GM13976 (cell line): ENCODE measurements at regions of chr3 and their contacts with region 1.

Region 1: DNA sequence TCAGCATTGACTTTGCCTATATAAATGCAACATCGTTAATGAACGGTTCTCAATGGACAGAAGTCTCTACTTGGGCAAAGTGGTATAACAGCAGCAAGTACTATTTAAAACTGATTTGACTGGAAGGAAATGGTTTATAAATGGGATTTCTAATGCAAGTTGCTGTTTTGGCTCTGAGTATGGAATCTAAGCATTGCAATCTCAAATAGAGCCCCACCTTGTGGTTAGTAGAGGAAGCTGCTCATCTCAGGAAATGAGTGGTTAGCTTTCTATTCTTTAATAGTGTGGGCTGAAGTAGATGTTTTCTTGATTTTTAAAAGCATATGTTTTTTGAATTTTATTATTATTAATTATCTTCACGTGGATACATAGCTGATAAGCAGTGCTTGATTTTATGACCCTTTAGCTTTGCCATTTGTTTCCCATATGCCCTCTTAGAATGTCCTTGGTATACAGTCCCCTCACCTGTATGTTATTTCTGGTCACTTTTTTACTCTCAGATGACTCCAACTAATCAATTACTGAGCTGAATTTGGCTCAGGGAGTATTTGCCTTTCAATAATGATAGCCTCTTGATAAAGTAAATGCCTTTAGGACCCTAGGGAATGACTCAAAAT is 67.1 kb downstream of the OXSM start:
- DNase-seq: peak; percentile 65
- CTCF ChIP-seq: peak; percentile 65

Region 2: GRCh38 chr3:25655659-25656058 is 201.4 kb before region 1 on chr3:
- in situ Hi-C with region 1: loop called (anchors 10 kb)
- DNase-seq: no peak
- CTCF ChIP-seq: no peak